ENCODE measurements at regions of chr15 and their contacts with region 1.

Region 1: GRCh38 chr15:52308446-52309153 is 13.0 kb upstream of the MYO5C start:
- DNase-seq: no peak
- H3K4me3 ChIP-seq: no peak overlapping the region
- H3K27ac ChIP-seq: no peak overlapping the region
- H3K4me1 ChIP-seq: no peaks in the 10 kb centered on the region
- H3K27me3 ChIP-seq: no peaks in the 10 kb centered on the region
- CTCF ChIP-seq: no peak
- POLR2A ChIP-seq: no peak

Region 2: DNA sequence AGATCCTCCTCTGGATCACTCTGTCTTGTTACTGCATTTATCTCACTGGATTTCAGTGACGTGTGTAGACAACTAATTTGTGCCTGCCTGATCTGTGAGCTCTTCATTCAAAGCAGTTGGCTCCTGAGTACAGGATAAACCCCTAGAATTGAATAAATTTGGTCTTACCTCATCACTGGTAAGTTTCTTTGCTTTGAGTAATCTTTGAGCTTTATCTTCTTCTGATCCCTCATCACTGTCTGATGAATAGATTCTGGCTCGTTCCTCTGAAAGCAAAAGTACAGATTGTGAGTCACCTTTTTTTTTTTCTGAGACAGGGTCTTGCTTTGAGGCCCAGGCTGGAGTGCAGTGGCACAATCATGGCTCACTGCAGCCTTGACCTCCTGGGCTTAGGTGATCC is 361.5 kb before region 1 on chr15:
- intact Hi-C with region 1: loop called (anchors 5 kb)
- DNase-seq: no peak
- H3K4me3 ChIP-seq: no peak overlapping the region
- H3K27ac ChIP-seq: no peak overlapping the region
- H3K4me1 ChIP-seq: no peaks in the 10 kb centered on the region
- H3K27me3 ChIP-seq: no peaks in the 10 kb centered on the region
- CTCF ChIP-seq: no peak
- POLR2A ChIP-seq: no peak

Region 3: GRCh38 chr15:52103217-52104207 is 205.1 kb before region 1 on chr15:
- intact Hi-C with region 1: no loop called
- DNase-seq: peak in 1 of 2 donors; percentile 43
- H3K4me3 ChIP-seq: no peak overlapping the region
- H3K27ac ChIP-seq: peak overlapping the region; percentile 5 to 58
- H3K4me1 ChIP-seq: no peaks in the 10 kb centered on the region
- H3K27me3 ChIP-seq: no peaks in the 10 kb centered on the region
- CTCF ChIP-seq: no peak
- POLR2A ChIP-seq: no peak

Region 4: GRCh38 chr15:52481915-52482314 is 173.3 kb after region 1 on chr15:
- intact Hi-C with region 1: no loop called
- DNase-seq: no peak
- H3K4me3 ChIP-seq: no peak overlapping the region
- H3K27ac ChIP-seq: no peak overlapping the region
- H3K4me1 ChIP-seq: peaks cover 0 to 6% of the 10 kb centered on the region in 2 donors
- H3K27me3 ChIP-seq: no peaks in the 10 kb centered on the region
- CTCF ChIP-seq: no peak
- POLR2A ChIP-seq: no peak